Breast epithelium (tissue), 4 donors: ENCODE measurements at regions of chr3 and their contacts with region 1.

Region 1: DNA sequence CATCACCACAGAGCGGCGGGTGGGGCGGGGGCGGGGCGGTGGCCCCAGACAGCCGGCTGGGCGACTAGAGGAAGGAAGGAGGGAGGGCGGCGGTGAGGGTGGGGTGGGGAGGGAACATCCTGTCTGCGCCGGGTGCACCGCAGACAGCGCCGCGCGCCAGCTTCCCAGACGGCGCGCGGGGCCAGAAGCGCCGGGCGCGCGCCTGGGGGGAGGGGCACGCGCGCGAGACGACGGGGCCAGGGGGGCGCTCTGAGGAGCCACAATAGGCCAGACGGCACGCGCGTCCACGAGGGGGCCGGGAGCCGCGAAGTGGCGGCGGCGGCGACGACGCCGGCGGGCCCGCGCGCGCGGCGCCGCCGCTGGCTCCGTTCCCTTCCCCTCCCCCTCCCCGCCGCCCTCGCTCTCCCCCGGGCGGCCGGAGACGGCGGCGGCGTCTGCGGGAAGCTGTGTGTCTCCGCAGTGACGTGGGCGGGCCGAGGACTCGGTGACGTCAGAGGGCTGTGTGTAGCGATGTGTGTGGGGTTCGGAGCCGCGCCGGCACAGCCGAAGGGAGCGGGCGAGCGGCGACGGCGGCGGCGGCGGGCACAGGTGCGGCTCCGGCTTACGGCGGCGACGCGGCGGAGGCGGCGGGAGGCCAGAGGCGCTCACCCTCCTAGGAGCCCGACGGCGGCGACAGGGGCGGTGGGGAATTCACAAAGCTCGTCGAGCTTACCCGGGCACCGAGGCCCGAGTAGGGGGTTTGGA is at the start of gene SKIL:
- DNase-seq: peak; percentile 95 to 97
- H3K4me3 ChIP-seq: peak within 1 kb of the TSS; percentile 89 to 99 (median 99)
- H3K27ac ChIP-seq: peak within 1 kb of the TSS; percentile 100
- H3K4me1 ChIP-seq: peaks cover 0 to 8% of the 10 kb centered on the region in 2 donors
- H3K27me3 ChIP-seq: no peaks in the 10 kb centered on the region
- CTCF ChIP-seq: peak in 1 of 3 donors; percentile 25
- POLR2A ChIP-seq: no peak
- total RNA-seq, gene SKIL: 37.0 to 64.5 (median 53.1) TPM

Region 2: GRCh38 chr3:170896781-170897180 is 539.4 kb after region 1 on chr3:
- intact Hi-C with region 1: no loop called
- DNase-seq: no peak
- H3K4me3 ChIP-seq: no peak overlapping the region
- H3K27ac ChIP-seq: no peak overlapping the region
- H3K4me1 ChIP-seq: no peaks in the 10 kb centered on the region
- H3K27me3 ChIP-seq: no peaks in the 10 kb centered on the region
- CTCF ChIP-seq: no peak
- POLR2A ChIP-seq: no peak

Region 3: DNA sequence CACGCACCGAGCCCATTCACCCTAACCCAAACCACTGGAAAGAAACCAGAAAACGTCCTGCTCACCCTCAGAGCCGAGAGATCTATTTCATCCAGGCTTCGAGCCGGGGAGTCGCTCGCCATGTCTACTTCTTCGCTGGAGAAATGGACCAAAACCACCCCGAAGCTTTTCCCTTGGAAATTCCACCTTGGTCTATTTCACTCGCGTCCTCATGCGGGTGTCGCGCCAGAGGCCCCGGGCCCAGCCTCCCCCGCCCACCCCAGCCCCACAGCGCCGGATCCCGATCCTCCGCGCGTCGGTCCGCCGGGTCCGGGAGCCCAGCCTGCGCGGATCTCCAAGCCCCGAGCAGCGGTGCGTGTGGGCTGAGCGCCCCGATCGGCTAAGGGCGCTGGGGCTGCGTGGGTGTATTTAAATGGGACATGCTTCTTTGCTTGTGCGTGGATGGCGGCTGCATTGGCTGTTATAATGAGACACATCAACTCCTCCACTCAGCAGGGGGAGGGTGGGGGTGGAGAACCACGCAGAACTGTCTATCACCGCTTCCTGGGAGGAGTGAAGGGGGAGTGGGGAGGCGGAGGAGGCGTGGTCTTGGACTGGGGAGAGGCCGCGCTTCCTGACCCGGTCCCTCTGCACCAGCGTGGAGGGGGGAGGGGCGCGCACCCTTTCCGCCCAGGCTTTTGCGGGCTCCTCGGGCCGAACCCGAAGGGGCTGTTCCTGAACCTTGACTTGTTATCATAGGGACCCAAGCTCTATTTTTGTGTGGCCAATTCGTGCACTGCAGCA is 1102.8 kb after region 1 on chr3 and contains the start of gene TNIK:
- intact Hi-C with region 1: loop called (anchors 5 kb)
- DNase-seq: peak; percentile 75 to 84
- H3K4me3 ChIP-seq: peak within 1 kb of the TSS; percentile 64 to 92 (median 81)
- H3K27ac ChIP-seq: peak within 1 kb of the TSS; percentile 77 to 80
- H3K4me1 ChIP-seq: no peaks in the 10 kb centered on the region
- H3K27me3 ChIP-seq: no peaks in the 10 kb centered on the region
- CTCF ChIP-seq: peak in 2 of 3 donors; percentile 39 to 49
- POLR2A ChIP-seq: no peak
- total RNA-seq, gene TNIK: 7.4 to 17.6 (median 10.2) TPM